ENCODE measurements at regions of chr2 and their contacts with region 1.

Region 1: DNA sequence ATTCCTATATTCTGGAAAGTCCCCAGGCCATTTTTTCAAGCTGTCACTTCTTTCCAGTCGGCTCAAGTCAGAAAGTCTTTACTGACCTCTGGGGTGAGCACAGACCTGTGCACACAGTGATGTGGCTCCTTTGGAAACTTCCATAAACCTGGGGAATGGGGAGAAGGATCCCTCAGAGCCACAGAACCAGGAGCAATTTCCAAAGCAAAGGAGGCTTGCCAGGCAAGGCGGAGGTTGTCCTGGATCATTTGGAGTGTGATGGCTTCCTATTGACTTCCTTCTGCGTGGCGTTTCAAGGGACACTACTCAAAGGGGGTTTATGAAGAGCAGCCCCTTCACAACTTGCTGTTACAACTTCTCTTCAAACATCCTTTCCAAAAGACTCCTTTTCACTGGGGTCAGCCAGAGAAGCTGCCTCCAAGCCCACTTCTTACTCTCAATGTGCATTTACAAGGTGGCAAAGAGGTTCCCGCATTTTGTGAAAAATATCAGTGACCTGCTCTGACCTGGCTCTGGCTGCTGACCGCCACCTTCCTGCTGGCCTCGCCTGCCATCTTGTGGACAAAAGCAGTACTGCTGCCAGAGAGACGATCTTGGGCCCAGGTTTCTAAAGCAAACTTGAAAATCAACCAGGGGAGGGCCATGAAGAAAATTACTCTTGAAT is 18.2 kb upstream of the TMEM247 start:
- DNase-seq: peak; percentile 63 to 88
- H3K4me3 ChIP-seq: no peak overlapping the region
- H3K4me3 Mint-ChIP-seq: no peak overlapping the region
- H3K27ac Mint-ChIP-seq: peak overlapping the region; percentile 12
- H3K4me1 ChIP-seq: no peaks in the 10 kb centered on the region
- H3K4me1 Mint-ChIP-seq: peaks cover 5% of the 10 kb centered on the region
- H3K27me3 ChIP-seq: no peaks in the 10 kb centered on the region
- H3K27me3 Mint-ChIP-seq: no peaks in the 10 kb centered on the region
- CTCF ChIP-seq: peak; percentile 97 to 98

Region 2: GRCh38 chr2:45993476-45993991 is 467.6 kb before region 1 on chr2:
- CTCF ChIA-PET with region 1: no interaction called
- POLR2A ChIA-PET with region 1: no interaction called
- intact Hi-C with region 1: loop called (anchors 1 kb)
- DNase-seq: peak; percentile 71 to 82
- H3K4me3 ChIP-seq: no peak overlapping the region
- H3K4me3 Mint-ChIP-seq: no peak overlapping the region
- H3K27ac Mint-ChIP-seq: no peak overlapping the region
- H3K4me1 ChIP-seq: no peaks in the 10 kb centered on the region; the same call in 1 of the 2 replicates
- H3K4me1 Mint-ChIP-seq: peaks cover 12% of the 10 kb centered on the region
- H3K27me3 ChIP-seq: no peaks in the 10 kb centered on the region
- H3K27me3 Mint-ChIP-seq: no peaks in the 10 kb centered on the region
- CTCF ChIP-seq: peak; percentile 80 to 83

Region 3: GRCh38 chr2:46010925-46011490 is 450.1 kb before region 1 on chr2:
- CTCF ChIA-PET with region 1: interaction called, 3 read pairs
- POLR2A ChIA-PET with region 1: no interaction called
- intact Hi-C with region 1: loop called (anchors 1 kb)
- DNase-seq: no peak
- H3K4me3 ChIP-seq: no peak overlapping the region
- H3K4me3 Mint-ChIP-seq: no peak overlapping the region
- H3K27ac Mint-ChIP-seq: no peak overlapping the region
- H3K4me1 ChIP-seq: peaks cover 17% of the 10 kb centered on the region
- H3K4me1 Mint-ChIP-seq: peaks cover 16% of the 10 kb centered on the region
- H3K27me3 ChIP-seq: no peaks in the 10 kb centered on the region
- H3K27me3 Mint-ChIP-seq: no peaks in the 10 kb centered on the region
- CTCF ChIP-seq: peak; percentile 61 to 67

Region 4: DNA sequence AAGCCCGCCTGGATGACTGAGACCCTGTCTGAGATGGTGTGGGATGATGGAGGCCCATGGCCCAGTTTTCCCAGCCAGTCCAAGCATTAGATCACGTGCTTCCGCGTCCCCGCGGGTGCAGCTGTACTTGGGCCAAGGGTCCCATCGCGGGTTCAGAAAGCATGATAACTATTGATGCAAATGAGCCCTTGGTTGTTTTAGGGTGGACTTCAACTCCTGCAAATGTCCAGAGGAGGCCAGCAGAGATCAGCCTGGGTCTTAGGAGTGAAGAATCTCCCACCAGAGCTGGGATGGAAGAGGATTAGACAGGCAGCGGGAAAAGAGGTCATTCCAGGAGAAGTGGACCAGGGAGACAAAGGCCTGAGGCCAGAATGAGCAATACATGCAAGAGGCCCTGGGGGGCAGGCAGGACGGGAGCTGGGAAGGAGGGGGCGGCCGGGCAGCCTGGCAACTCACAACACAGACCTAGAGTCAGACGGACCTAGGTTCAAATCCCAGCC is 71.7 kb before region 1 on chr2:
- CTCF ChIA-PET with region 1: no interaction called
- POLR2A ChIA-PET with region 1: no interaction called
- intact Hi-C with region 1: loop called (anchors 2 kb)
- DNase-seq: no peak
- H3K4me3 ChIP-seq: no peak overlapping the region
- H3K4me3 Mint-ChIP-seq: no peak overlapping the region
- H3K27ac Mint-ChIP-seq: no peak overlapping the region
- H3K4me1 ChIP-seq: no peaks in the 10 kb centered on the region
- H3K4me1 Mint-ChIP-seq: peaks cover 7% of the 10 kb centered on the region
- H3K27me3 ChIP-seq: no peaks in the 10 kb centered on the region
- H3K27me3 Mint-ChIP-seq: no peaks in the 10 kb centered on the region
- CTCF ChIP-seq: peak in 1 of 2 experiments; percentile 33

Region 5: DNA sequence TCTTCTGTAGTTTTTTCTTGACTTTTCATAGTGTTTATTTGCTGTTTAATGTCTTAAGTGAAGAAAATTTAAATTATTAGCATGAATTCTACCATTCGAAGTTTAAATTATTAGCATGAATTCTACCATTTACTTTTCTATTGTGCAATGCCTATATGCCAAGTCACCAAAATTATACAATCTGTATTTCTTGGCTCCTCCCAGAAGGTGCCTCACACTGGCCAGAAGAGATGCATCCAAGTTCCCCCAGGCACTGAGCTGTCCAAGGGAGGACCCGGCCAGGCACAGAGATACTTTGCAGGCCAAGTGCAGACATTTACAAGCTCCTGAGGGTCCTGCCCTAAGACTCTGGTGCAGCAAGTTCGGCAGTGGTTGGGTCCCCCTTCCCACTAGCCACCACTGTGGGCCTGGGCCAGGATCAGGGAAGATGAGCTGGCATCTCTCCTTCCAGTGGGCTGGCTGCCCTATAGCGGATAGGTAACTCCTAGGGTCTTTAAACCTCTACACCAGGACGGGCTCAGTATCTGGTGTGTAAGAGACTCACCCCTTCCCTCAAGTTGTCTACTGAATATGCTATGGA is 49.5 kb after region 1 on chr2:
- CTCF ChIA-PET with region 1: no interaction called
- POLR2A ChIA-PET with region 1: no interaction called
- intact Hi-C with region 1: no loop called
- DNase-seq: no peak
- H3K4me3 ChIP-seq: no peak overlapping the region
- H3K4me3 Mint-ChIP-seq: no peak overlapping the region
- H3K27ac Mint-ChIP-seq: no peak overlapping the region
- H3K4me1 ChIP-seq: no peaks in the 10 kb centered on the region
- H3K4me1 Mint-ChIP-seq: no peaks in the 10 kb centered on the region
- H3K27me3 ChIP-seq: no peaks in the 10 kb centered on the region
- H3K27me3 Mint-ChIP-seq: peaks cover 15% of the 10 kb centered on the region
- CTCF ChIP-seq: no peak